ENCODE measurements at regions of chr1 and their contacts with region 1.

Region 1: GRCh38 chr1:78617615-78618026 is 2.6 kb upstream of the IFI44L start:
- DNase-seq: peak; percentile 79
- ATAC-seq: peak; percentile 92
- H3K4me3 ChIP-seq: no peak overlapping the region
- H3K27ac ChIP-seq: no peak overlapping the region
- H3K4me1 ChIP-seq: peaks cover 0 to 3% of the 10 kb centered on the region in 2 experiments; a peak in 2 of 4 replicates
- H3K27me3 ChIP-seq: no peaks in the 10 kb centered on the region
- CTCF ChIP-seq: peak; percentile 70 to 85 (median 79)
- POLR2A ChIP-seq: no peak
- RAD21 ChIP-seq: peak; percentile 79

Region 2: DNA sequence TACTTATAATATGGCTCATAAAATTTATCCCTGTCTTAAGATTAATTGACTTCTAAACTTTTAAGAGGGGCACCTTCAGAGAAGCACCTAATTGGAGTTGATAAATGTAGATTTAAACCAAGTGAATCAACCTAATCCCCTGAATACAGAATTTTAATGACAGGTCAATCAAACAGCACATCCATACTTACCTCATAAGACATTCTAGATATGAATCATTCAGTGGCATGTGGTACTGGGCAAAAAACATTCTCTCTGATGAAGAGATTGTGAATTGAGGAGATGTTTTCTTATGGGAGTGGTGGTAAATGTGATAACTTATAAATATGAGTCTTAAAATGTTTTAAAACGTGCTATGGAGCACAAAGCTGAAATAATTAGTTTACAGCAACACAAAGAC is 294.3 kb before region 1 on chr1:
- CTCF ChIA-PET with region 1: no interaction called
- POLR2A ChIA-PET with region 1: no interaction called
- RAD21 ChIA-PET with region 1: no interaction called
- intact Hi-C with region 1: no loop called
- DNase-seq: no peak
- ATAC-seq: no peak
- H3K4me3 ChIP-seq: no peak overlapping the region
- H3K27ac ChIP-seq: no peak overlapping the region
- H3K4me1 ChIP-seq: no peaks in the 10 kb centered on the region
- H3K27me3 ChIP-seq: no peaks in the 10 kb centered on the region
- CTCF ChIP-seq: no peak
- POLR2A ChIP-seq: no peak
- RAD21 ChIP-seq: no peak

Region 3: GRCh38 chr1:78676347-78676982 is 58.8 kb after region 1 on chr1:
- CTCF ChIA-PET with region 1: interaction called, 11 read pairs
- POLR2A ChIA-PET with region 1: no interaction called
- RAD21 ChIA-PET with region 1: no interaction called
- intact Hi-C with region 1: loop called (anchors 1 kb)
- DNase-seq: peak; percentile 40
- ATAC-seq: peak; percentile 63
- H3K4me3 ChIP-seq: no peak overlapping the region
- H3K27ac ChIP-seq: no peak overlapping the region
- H3K4me1 ChIP-seq: no peaks in the 10 kb centered on the region
- H3K27me3 ChIP-seq: no peaks in the 10 kb centered on the region
- CTCF ChIP-seq: peak; percentile 62 to 83 (median 72); a peak in 5 of 6 replicates
- POLR2A ChIP-seq: no peak
- RAD21 ChIP-seq: peak; percentile 75

Region 4: GRCh38 chr1:79197421-79197820 is 579.8 kb after region 1 on chr1:
- CTCF ChIA-PET with region 1: no interaction called
- POLR2A ChIA-PET with region 1: no interaction called
- RAD21 ChIA-PET with region 1: no interaction called
- intact Hi-C with region 1: loop called (anchors 5 kb)
- DNase-seq: peak; percentile 22
- ATAC-seq: no peak
- H3K4me3 ChIP-seq: no peak overlapping the region
- H3K27ac ChIP-seq: no peak overlapping the region
- H3K4me1 ChIP-seq: peaks cover 3 to 15% of the 10 kb centered on the region in 2 experiments
- H3K27me3 ChIP-seq: no peaks in the 10 kb centered on the region
- CTCF ChIP-seq: peak in 2 of 3 experiments; percentile 20 to 33; a peak in 2 of 6 replicates
- POLR2A ChIP-seq: no peak
- RAD21 ChIP-seq: peak; percentile 58

Measured in HCT116 (cell line).